ENCODE measurements at regions of chr13 and their contacts with region 1.

Region 1: DNA sequence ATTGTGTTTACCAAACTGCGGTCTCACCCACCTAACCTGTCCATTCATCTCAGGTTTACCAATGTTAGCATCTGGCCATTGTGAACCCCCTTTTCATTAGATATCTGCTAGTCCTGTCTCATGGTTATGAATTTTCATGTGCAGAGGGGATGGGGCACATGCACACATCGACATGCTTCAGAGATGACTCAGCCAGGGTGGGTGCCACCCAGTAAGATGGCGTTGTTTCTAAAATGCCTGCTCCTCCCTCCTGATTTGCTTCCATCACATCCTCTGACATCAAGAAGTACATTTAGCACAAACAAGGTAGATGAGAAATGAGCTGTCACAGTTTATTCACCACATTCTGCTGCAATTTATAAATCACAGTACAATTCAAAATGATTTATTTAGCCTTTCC is 51.3 kb downstream of the GPALPP1 start:
- DNase-seq: no peak
- ATAC-seq: no peak
- H3K4me3 ChIP-seq: no peak overlapping the region
- H3K27ac ChIP-seq: no peak overlapping the region
- H3K4me1 ChIP-seq: peaks cover 17% of the 10 kb centered on the region
- H3K27me3 ChIP-seq: no peaks in the 10 kb centered on the region
- CTCF ChIP-seq: no peak
- POLR2A ChIP-seq: no peak
- RAD21 ChIP-seq: no peak

Region 2: GRCh38 chr13:44212633-44213403 is 827.8 kb before region 1 on chr13:
- CTCF ChIA-PET with region 1: no interaction called
- POLR2A ChIA-PET with region 1: no interaction called
- dilution Hi-C with region 1: no loop called
- in situ Hi-C with region 1: no loop called
- intact Hi-C with region 1: no loop called
- DNase-seq: peak; percentile 77
- ATAC-seq: peak; percentile 81
- H3K4me3 ChIP-seq: no peak overlapping the region
- H3K27ac ChIP-seq: peak overlapping the region; percentile 28; the same call in 1 of the 2 replicates
- H3K4me1 ChIP-seq: peaks cover 3% of the 10 kb centered on the region; the same call in 1 of the 2 replicates
- H3K27me3 ChIP-seq: peaks cover 6% of the 10 kb centered on the region; the same call in 1 of the 2 replicates
- CTCF ChIP-seq: no peak
- POLR2A ChIP-seq: no peak
- RAD21 ChIP-seq: no peak

Region 3: GRCh38 chr13:45297456-45298205 is 257.0 kb after region 1 on chr13:
- CTCF ChIA-PET with region 1: no interaction called
- POLR2A ChIA-PET with region 1: no interaction called
- dilution Hi-C with region 1: no loop called
- in situ Hi-C with region 1: loop called (anchors 5 kb)
- intact Hi-C with region 1: no loop called
- DNase-seq: no peak
- ATAC-seq: no peak
- H3K4me3 ChIP-seq: no peak overlapping the region
- H3K27ac ChIP-seq: no peak overlapping the region
- H3K4me1 ChIP-seq: peaks cover 5% of the 10 kb centered on the region
- H3K27me3 ChIP-seq: no peaks in the 10 kb centered on the region
- CTCF ChIP-seq: no peak
- POLR2A ChIP-seq: no peak
- RAD21 ChIP-seq: no peak